Activated CD4-positive, alpha-beta T cell treated with anti-CD3 and anti-CD28 coated beads for 36 hours (primary cell): ENCODE measurements at regions of chr1 and their contacts with region 1.

Region 1: GRCh38 chr1:54488779-54489626 is 59.0 kb upstream of the ACOT11 start:
- DNase-seq: peak; percentile 82
- ATAC-seq: peak; percentile 71
- H3K4me3 Mint-ChIP-seq: peak overlapping the region; percentile 73
- H3K27ac Mint-ChIP-seq: peak overlapping the region; percentile 69
- H3K4me1 Mint-ChIP-seq: peaks cover 39% of the 10 kb centered on the region
- H3K27me3 Mint-ChIP-seq: peaks cover 6% of the 10 kb centered on the region

Region 2: DNA sequence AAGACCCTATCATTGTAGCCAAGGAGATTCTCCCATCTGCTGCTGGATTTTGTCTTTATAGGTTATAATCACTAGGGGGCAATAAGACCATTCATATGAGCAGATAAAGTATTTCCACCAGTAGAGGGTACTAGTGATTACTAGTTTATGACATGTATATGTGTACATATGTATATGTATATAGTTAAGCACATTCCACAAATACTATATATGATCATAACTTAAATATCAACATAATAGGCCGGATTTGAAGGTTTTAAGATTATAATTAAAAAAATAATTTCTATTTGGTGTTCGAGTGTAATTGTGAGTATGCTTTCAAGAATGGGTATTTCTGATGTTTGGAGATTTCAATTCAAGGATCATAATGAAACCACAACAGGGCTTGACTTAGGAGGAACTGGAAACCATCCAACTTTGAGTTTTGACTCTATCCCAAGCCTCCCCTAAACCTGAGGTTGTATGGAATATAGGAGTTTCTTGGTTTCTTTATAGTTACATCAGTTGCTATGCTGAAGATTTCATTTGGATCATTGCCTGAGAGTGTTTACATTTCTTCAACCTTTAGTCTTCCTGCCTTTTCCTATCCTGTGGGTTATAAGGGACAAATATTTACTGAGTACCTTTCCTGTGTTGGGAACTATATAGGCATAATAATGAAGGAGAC is 418.7 kb before region 1 on chr1:
- CTCF ChIA-PET with region 1: interaction called, 5 read pairs
- POLR2A ChIA-PET with region 1: no interaction called
- intact Hi-C with region 1: loop called (anchors 1 to 2 kb)
- DNase-seq: no peak
- ATAC-seq: peak; percentile 97
- H3K4me3 Mint-ChIP-seq: no peak overlapping the region
- H3K27ac Mint-ChIP-seq: no peak overlapping the region
- H3K4me1 Mint-ChIP-seq: no peaks in the 10 kb centered on the region
- H3K27me3 Mint-ChIP-seq: no peaks in the 10 kb centered on the region

Region 3: DNA sequence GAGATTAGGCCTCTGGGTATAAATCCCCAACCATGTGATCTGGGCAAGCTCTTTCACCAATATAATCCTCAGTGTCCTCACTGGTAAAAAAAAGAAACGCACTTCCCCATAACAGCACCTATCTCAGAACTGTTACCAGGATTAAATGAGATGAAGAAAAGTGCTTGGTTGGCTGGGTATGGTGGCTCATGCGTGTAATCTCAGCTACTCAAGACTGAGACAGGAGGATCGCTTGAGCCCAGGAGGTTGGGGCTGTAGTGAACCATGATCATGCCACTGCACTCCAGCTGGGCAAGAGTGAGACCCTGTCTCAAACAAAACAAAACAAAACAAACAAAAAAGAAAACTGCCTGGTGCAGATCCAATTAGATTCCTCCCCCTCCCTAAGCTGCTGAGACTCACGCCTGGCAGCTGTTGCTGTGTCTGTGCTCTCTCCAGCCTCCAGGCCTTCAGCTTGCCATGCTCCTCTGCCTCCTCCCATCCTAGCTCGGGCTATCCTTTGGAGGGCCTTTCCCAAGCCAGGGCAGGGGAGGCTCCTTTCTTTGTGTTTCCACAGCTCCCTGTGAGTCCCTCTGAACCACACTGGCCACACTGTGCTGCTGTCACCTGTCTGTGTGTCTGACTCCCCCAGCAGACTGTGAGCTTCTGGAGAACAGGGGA is 308.2 kb before region 1 on chr1:
- CTCF ChIA-PET with region 1: interaction called, 28 read pairs
- POLR2A ChIA-PET with region 1: no interaction called
- intact Hi-C with region 1: loop called in 1 of 2 experiments (anchors 1 kb)
- DNase-seq: no peak
- ATAC-seq: no peak
- H3K4me3 Mint-ChIP-seq: no peak overlapping the region
- H3K27ac Mint-ChIP-seq: no peak overlapping the region
- H3K4me1 Mint-ChIP-seq: no peaks in the 10 kb centered on the region
- H3K27me3 Mint-ChIP-seq: no peaks in the 10 kb centered on the region

Region 4: DNA sequence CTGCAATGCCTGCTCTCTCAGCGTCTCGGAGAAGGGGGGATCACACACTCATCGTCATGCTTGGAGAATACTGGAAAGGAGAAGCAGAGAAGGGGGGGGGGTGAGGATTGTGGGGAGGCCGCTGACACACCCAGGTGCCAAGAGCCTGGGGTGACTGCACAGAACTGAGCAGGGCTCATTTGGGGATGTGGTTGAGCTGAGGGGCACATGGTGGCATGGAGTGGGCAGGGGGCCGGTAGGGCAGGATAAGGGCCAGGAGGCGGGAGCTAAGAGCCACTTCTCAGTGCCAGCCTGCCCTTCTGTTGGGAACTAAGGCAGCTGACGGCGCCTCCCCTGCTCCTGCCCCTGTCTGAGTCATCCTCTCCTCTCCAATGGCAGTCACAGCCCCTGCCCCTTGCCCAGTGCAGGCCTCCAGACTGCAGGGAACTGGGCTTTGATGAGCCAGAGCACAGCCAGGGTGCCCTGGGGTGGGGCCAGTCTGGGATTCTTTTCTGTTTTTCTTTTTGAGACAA is 261.9 kb before region 1 on chr1:
- CTCF ChIA-PET with region 1: no interaction called
- POLR2A ChIA-PET with region 1: no interaction called
- intact Hi-C with region 1: loop called in 1 of 2 experiments (anchors 1 kb)
- DNase-seq: peak; percentile 29
- ATAC-seq: no peak
- H3K4me3 Mint-ChIP-seq: no peak overlapping the region
- H3K27ac Mint-ChIP-seq: no peak overlapping the region
- H3K4me1 Mint-ChIP-seq: peaks cover 24% of the 10 kb centered on the region
- H3K27me3 Mint-ChIP-seq: no peaks in the 10 kb centered on the region

Region 5: DNA sequence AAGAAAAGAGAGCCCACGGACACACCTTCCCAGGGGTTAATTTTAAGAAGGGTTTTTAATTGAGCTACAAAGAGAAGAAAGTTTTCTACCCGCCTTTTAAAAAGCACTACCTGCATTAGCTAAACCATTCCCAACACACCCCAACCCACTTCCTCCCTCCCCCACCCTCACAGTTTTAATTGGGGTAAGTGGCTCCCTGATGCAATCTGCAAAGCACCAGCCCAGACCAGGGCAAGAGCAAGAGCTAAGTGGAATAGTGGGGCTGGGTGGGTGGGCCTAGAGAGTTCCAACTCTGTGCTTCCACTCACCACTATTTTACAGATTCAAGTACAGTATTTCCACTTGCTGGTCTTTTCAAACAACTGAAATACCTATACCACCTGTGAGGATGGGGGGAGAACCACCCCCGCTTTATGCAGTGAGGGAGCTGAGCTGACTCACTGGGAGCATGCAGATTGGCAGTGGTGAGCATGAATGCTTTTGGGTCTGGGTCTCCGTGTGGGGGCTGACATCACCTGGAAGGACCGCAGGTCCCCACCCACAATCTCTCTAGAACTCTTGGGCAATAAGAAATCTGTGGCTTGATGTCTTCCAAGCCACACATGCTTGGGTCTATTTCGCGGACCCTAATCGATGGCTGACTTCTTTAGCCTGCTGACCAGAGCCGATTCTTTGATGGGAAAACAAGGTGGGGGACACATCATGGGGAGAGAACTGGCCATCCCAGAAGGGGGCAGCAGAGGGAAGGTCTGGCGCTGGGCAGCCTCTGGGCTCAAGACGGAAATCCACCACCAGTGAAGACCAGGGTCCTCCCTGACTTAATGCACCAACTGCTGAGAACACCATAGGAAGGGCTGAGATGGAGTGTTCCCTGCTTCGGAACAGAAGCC is 178.3 kb before region 1 on chr1:
- CTCF ChIA-PET with region 1: interaction called, 3 read pairs
- POLR2A ChIA-PET with region 1: no interaction called
- intact Hi-C with region 1: loop called in 1 of 2 experiments (anchors 2 kb)
- DNase-seq: peak; percentile 51
- ATAC-seq: peak; percentile 75
- H3K4me3 Mint-ChIP-seq: no peak overlapping the region
- H3K27ac Mint-ChIP-seq: peak overlapping the region; percentile 78
- H3K4me1 Mint-ChIP-seq: peaks cover 63% of the 10 kb centered on the region
- H3K27me3 Mint-ChIP-seq: no peaks in the 10 kb centered on the region

Region 6: GRCh38 chr1:54406339-54407153 is 82.5 kb before region 1 on chr1 and contains the start of gene SSBP3:
- CTCF ChIA-PET with region 1: interaction called, 7 read pairs
- POLR2A ChIA-PET with region 1: interaction called, 4 read pairs
- intact Hi-C with region 1: loop called (anchors 1 to 10 kb)
- DNase-seq: peak; percentile 95
- ATAC-seq: peak; percentile 84
- H3K4me3 Mint-ChIP-seq: peak within 1 kb of the TSS; percentile 76
- H3K27ac Mint-ChIP-seq: peak within 1 kb of the TSS; percentile 88
- H3K4me1 Mint-ChIP-seq: peaks cover 57% of the 10 kb centered on the region
- H3K27me3 Mint-ChIP-seq: no peaks in the 10 kb centered on the region
- total RNA-seq, gene SSBP3: 40.3 to 64.2 TPM